Lower leg skin (tissue), 4 donors: ENCODE measurements at regions of chr7 and their contacts with region 1.

Region 1: GRCh38 chr7:155796381-155797261 is 15.6 kb downstream of the SHH start:
- DNase-seq: no peak
- H3K4me3 ChIP-seq: no peak overlapping the region
- CTCF ChIP-seq: no peak
- POLR2A ChIP-seq: no peak

Region 2: DNA sequence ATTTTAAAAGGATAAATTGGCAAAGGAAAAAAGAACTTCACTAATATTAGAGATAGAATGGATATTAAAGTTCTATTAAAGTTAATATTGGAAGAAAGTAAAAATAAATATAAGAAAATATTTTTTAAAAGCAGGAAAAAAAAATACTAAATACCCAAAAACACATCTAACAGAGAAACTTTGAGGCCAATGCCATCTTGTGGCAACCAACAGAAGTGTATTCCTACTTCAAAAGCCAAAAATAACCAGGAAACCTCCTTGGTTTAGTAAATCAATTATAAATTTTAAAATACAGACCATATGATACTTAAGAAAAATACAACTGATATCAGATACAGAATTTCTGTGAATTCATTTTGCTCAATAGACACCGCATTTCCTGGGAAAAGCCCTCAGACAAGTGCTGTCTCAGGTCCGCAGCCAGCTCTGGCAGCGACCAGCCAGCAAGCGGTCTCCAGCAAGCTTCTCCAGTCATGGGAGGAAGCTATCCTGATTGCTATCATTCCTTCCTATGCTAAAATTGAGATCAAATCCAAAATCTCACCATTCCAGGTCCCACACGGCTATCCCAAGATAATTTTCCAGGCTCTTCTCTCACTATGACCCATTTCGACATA is 1031.1 kb after region 1 on chr7:
- intact Hi-C with region 1: loop called (anchors 10 kb)
- DNase-seq: no peak
- H3K4me3 ChIP-seq: no peak overlapping the region
- CTCF ChIP-seq: no peak
- POLR2A ChIP-seq: no peak